ENCODE measurements at regions of chr14 and their contacts with region 1.

Region 1: DNA sequence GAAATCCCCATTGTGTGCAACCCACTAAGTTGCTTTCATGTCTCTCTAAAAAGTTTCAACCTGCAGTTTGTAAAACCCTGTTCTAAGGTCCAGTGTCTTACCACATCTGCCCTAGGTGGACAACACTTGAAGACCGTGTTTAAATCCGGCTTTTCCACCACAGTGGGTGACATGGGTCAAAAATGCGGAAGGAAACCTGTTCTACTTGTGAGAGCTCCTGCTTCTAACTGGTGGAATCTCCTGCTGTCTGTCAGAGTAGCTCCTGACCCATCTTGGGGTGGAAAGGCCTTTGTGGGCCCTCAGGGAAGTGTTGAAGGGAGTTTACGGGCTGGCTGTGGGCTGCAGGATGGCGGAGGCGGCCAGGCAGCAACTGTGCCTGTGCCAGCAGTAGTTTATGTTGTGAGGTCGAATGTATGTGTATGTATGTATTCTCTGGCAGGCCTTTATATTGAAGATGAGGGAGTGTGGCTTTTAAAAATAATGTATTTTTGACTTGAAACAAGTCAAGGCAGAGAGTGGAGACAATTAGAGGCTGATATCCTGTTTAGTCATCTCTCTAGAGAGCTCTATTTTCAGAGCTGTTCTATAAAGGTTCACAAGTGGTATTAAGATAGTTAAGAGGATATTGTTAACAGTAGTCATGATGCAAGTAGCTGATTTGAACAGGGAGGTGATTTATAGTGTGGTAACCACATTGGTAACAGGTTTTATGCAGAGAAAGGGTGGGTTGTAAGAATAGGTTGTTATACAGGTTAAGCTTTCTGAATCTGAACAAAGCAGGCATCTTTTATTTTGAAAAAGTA is 67.0 kb downstream of the PRKCH start:
- DNase-seq: peak; percentile 90
- ATAC-seq: peak; percentile 86
- H3K4me3 ChIP-seq: peak overlapping the region; percentile 5; the same call in 1 of the 2 replicates
- H3K27ac ChIP-seq: peak overlapping the region; percentile 90
- H3K4me1 ChIP-seq: peaks cover 28% of the 10 kb centered on the region
- H3K27me3 ChIP-seq: no peaks in the 10 kb centered on the region
- CTCF ChIP-seq: no peak

Region 2: DNA sequence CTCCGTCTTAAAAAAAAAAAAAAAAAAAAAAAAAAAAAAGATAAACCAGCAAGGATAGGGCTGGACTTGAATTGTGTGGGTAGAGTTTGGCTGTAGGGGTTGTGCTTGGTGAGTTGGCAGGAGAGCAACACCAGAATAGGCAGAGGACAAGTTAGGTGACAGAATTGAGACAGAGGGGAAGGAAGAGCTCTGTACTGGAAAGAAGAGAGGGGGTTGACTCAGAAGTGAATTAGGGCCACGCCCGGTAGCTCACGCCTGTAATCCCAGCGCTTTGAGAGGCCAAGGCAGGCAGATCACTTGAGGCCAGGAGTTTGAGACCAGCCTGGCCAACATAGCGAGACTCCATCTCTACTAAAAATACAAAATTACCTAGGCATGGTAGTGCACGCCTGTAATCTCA is 101.2 kb before region 1 on chr14:
- CTCF ChIA-PET with region 1: interaction called, 12 read pairs
- POLR2A ChIA-PET with region 1: no interaction called
- intact Hi-C with region 1: no loop called
- DNase-seq: peak; percentile 40
- ATAC-seq: no peak
- H3K4me3 ChIP-seq: no peak overlapping the region
- H3K27ac ChIP-seq: no peak overlapping the region
- H3K4me1 ChIP-seq: peaks cover 45% of the 10 kb centered on the region
- H3K27me3 ChIP-seq: no peaks in the 10 kb centered on the region
- CTCF ChIP-seq: no peak

Region 3: GRCh38 chr14:61308198-61308597 is 80.2 kb before region 1 on chr14:
- CTCF ChIA-PET with region 1: no interaction called
- POLR2A ChIA-PET with region 1: no interaction called
- intact Hi-C with region 1: no loop called
- DNase-seq: no peak
- ATAC-seq: no peak; the same call in 1 of the 2 replicates
- H3K4me3 ChIP-seq: no peak overlapping the region
- H3K27ac ChIP-seq: no peak overlapping the region
- H3K4me1 ChIP-seq: no peaks in the 10 kb centered on the region
- H3K27me3 ChIP-seq: no peaks in the 10 kb centered on the region
- CTCF ChIP-seq: no peak

Region 4: GRCh38 chr14:61355892-61356325 is 32.5 kb before region 1 on chr14:
- CTCF ChIA-PET with region 1: no interaction called
- POLR2A ChIA-PET with region 1: no interaction called
- intact Hi-C with region 1: loop called (anchors 1 kb)
- DNase-seq: peak; percentile 100
- ATAC-seq: peak; percentile 99
- H3K4me3 ChIP-seq: peak overlapping the region; percentile 60
- H3K27ac ChIP-seq: peak overlapping the region; percentile 75
- H3K4me1 ChIP-seq: peaks cover 25% of the 10 kb centered on the region
- H3K27me3 ChIP-seq: no peaks in the 10 kb centered on the region
- CTCF ChIP-seq: no peak

Region 5: GRCh38 chr14:61438860-61439684 is 50.7 kb after region 1 on chr14:
- CTCF ChIA-PET with region 1: no interaction called
- POLR2A ChIA-PET with region 1: no interaction called
- intact Hi-C with region 1: loop called (anchors 1 kb)
- DNase-seq: peak; percentile 96
- ATAC-seq: peak; percentile 89
- H3K4me3 ChIP-seq: peak overlapping the region; percentile 48
- H3K27ac ChIP-seq: peak overlapping the region; percentile 76
- H3K4me1 ChIP-seq: peaks cover 32% of the 10 kb centered on the region
- H3K27me3 ChIP-seq: no peaks in the 10 kb centered on the region
- CTCF ChIP-seq: no peak

Measured in PC-3 (cell line).